Right lobe of liver (tissue), 6 donors: ENCODE measurements at regions of chr12 and their contacts with region 1.

Region 1: GRCh38 chr12:34347367-34347766 is 325.1 kb downstream of the ALG10 start:
- DNase-seq: no peak
- ATAC-seq: peak in 2 of 4 donors; percentile 17
- H3K4me3 ChIP-seq: no peak overlapping the region
- H3K27ac ChIP-seq: no peak overlapping the region
- H3K4me1 ChIP-seq: no peaks in the 10 kb centered on the region
- H3K27me3 ChIP-seq: no peaks in the 10 kb centered on the region
- CTCF ChIP-seq: peak in 1 of 4 donors; percentile 7
- POLR2A ChIP-seq: no peak

Region 2: GRCh38 chr12:34198924-34199323 is 148.4 kb before region 1 on chr12:
- intact Hi-C with region 1: no loop called
- DNase-seq: no peak
- ATAC-seq: no peak
- H3K4me3 ChIP-seq: no peak overlapping the region
- H3K27ac ChIP-seq: no peak overlapping the region
- H3K4me1 ChIP-seq: no peaks in the 10 kb centered on the region
- H3K27me3 ChIP-seq: no peaks in the 10 kb centered on the region
- CTCF ChIP-seq: no peak
- POLR2A ChIP-seq: no peak

Region 3: GRCh38 chr12:34209259-34209835 is 138.0 kb before region 1 on chr12:
- intact Hi-C with region 1: no loop called
- DNase-seq: no peak
- ATAC-seq: no peak
- H3K4me3 ChIP-seq: no peak overlapping the region
- H3K27ac ChIP-seq: no peak overlapping the region
- H3K4me1 ChIP-seq: no peaks in the 10 kb centered on the region
- H3K27me3 ChIP-seq: no peaks in the 10 kb centered on the region
- CTCF ChIP-seq: no peak
- POLR2A ChIP-seq: no peak

Region 4: DNA sequence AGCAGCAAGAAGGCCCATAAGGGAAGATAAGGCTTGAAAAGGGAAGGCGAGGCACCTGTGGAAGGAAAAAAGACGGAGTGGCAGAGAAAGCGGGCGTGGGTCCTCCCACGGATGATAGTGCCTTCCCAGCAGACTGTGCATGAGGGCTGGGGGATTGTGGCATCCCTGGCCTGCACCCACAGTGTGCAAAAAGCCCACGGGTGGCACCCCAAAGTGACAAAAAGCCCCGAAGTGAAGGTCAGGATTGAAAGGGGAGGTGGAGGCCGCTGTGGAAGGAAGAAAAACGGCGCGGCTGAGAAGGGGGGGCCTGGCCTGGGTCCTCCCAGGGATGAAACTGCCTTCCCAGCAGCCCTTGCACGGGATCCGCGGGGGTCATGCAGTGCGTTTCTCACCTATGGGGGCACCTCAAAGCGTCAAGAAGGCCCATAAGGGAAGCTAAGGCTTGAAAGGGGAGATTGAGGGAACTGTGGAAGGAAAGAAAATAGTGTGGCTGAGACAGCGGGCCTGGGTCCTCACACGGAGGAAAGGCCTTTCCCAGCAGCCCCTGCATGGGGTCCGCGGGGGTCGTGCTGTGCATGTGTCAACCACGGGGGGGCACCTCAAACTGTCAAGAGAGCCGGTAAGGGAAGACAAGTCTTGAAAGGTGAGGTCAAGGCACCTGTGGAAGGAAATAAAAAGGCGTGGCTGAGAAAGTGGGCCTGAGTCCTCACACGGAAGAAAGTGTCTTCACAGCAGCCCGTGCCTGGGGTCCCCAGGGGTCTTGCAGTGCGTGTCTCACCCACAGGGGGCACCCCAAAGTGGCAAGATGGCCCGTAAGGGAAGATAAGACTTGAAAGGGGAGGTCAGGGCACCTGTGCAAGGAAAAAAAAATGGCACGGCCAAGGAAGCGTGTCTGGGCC is 51.0 kb before region 1 on chr12:
- intact Hi-C with region 1: loop called in 1 of 2 experiments (anchors 5 kb)
- DNase-seq: peak in 2 of 3 donors; percentile 6 to 31
- ATAC-seq: no peak
- H3K4me3 ChIP-seq: no peak overlapping the region
- H3K27ac ChIP-seq: no peak overlapping the region
- H3K4me1 ChIP-seq: no peaks in the 10 kb centered on the region
- H3K27me3 ChIP-seq: no peaks in the 10 kb centered on the region
- CTCF ChIP-seq: no peak
- POLR2A ChIP-seq: no peak

Region 5: GRCh38 chr12:34398706-34399630 is 51.6 kb after region 1 on chr12:
- intact Hi-C with region 1: no loop called
- DNase-seq: peak; percentile 12 to 37 (median 27)
- ATAC-seq: no peak
- H3K4me3 ChIP-seq: no peak overlapping the region
- H3K27ac ChIP-seq: no peak overlapping the region
- H3K4me1 ChIP-seq: no peaks in the 10 kb centered on the region
- H3K27me3 ChIP-seq: no peaks in the 10 kb centered on the region
- CTCF ChIP-seq: no peak
- POLR2A ChIP-seq: no peak